ENCODE measurements at regions of chr7 and their contacts with region 1.

Region 1: GRCh38 chr7:2834743-2835451 is 9.2 kb downstream of the GNA12 start:
- DNase-seq: no peak
- H3K4me3 ChIP-seq: no peak overlapping the region
- H3K27ac ChIP-seq: no peak overlapping the region
- H3K4me1 ChIP-seq: peaks cover 0 to 21% (median 16%) of the 10 kb centered on the region in 4 experiments
- H3K27me3 ChIP-seq: no peaks in the 10 kb centered on the region

Region 2: GRCh38 chr7:2709553-2710285 is 125.2 kb before region 1 on chr7:
- CTCF ChIA-PET with region 1: no interaction called
- POLR2A ChIA-PET with region 1: no interaction called
- DNase-seq: peak; percentile 74 to 90 (median 87)
- H3K4me3 ChIP-seq: peak overlapping the region in 2 of 7 experiments; percentile 36 to 65
- H3K27ac ChIP-seq: no peak overlapping the region
- H3K4me1 ChIP-seq: peaks cover 0 to 64% (median 54%) of the 10 kb centered on the region in 4 experiments
- H3K27me3 ChIP-seq: no peaks in the 10 kb centered on the region

Region 3: DNA sequence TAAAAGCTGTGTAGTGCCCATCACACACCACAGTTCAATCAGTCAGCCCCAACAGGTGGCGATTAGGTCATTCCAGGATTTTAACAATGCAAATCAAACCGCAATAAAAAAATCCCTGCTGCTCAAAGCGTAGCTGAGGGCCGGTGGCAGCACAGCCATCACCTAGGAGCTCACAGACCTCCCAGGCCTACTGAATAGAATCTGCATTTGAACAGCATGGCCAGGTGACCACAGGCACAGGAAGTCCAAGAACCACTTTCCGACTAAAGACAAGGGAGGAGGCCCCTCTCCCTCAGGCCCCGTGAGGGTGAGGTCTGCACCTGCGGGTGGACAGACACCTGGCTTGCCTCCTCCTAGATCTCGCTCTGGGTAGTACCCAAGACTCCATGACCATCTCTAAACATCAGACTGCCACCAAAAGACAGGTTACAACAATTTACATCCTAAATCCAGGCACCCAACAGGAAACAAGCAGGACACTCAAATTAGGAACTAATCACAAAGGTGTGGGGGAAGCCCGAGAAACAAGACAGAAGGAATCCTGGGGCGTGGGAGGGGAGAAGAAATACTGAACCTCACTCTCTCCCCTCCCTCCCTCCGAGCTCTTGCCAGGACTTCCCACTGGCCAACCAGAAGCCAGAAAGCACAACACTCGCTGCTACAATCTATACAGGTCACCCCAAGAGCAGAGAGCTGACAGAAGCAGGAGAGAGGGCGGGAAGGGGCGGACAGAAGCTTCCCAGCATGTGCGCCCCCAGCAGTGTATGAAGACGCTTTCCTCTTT is 10.0 kb before region 1 on chr7:
- CTCF ChIA-PET with region 1: interaction called, 11 read pairs
- POLR2A ChIA-PET with region 1: no interaction called
- DNase-seq: no peak
- H3K4me3 ChIP-seq: no peak overlapping the region
- H3K27ac ChIP-seq: no peak overlapping the region
- H3K4me1 ChIP-seq: peaks cover 5 to 44% (median 38%) of the 10 kb centered on the region in 4 experiments
- H3K27me3 ChIP-seq: no peaks in the 10 kb centered on the region

Measured in common myeloid progenitor, CD34-positive (primary cell).